CD4-positive, alpha-beta memory T cell (primary cell): ENCODE measurements at regions of chr14 and their contacts with region 1.

Region 1: GRCh38 chr14:102591889-102592763 is at the start of gene RCOR1:
- DNase-seq: peak; percentile 97 to 99 (median 98)
- H3K4me3 ChIP-seq: peak within 1 kb of the TSS; percentile 52 to 86
- H3K4me3 Mint-ChIP-seq: peak within 1 kb of the TSS; percentile 90 to 97 (median 94)
- H3K27ac ChIP-seq: peak within 1 kb of the TSS; percentile 77
- H3K27ac Mint-ChIP-seq: peak within 1 kb of the TSS; percentile 93 to 98 (median 96)
- H3K4me1 ChIP-seq: peaks cover 25% of the 10 kb centered on the region
- H3K4me1 Mint-ChIP-seq: peaks cover 13 to 28% (median 22%) of the 10 kb centered on the region in 4 donors
- H3K27me3 ChIP-seq: no peaks in the 10 kb centered on the region
- H3K27me3 Mint-ChIP-seq: no peaks in the 10 kb centered on the region
- total RNA-seq, gene RCOR1: 19.4 to 21.5 TPM

Region 2: GRCh38 chr14:101947906-101948665 is 644.0 kb before region 1 on chr14:
- CTCF ChIA-PET with region 1: no interaction called
- POLR2A ChIA-PET with region 1: no interaction called
- intact Hi-C with region 1: loop called (anchors 1 kb)
- DNase-seq: peak; percentile 99 to 100 (median 100)
- H3K4me3 ChIP-seq: peak overlapping the region; percentile 87 to 98
- H3K4me3 Mint-ChIP-seq: peak overlapping the region; percentile 92 to 99 (median 96)
- H3K27ac ChIP-seq: peak overlapping the region; percentile 94
- H3K27ac Mint-ChIP-seq: peak overlapping the region; percentile 99 to 100 (median 100)
- H3K4me1 ChIP-seq: peaks cover 13% of the 10 kb centered on the region
- H3K4me1 Mint-ChIP-seq: peaks cover 6 to 31% (median 21%) of the 10 kb centered on the region in 4 donors
- H3K27me3 ChIP-seq: peaks cover 5% of the 10 kb centered on the region
- H3K27me3 Mint-ChIP-seq: peaks cover 9 to 16% of the 10 kb centered on the region in 2 donors

Region 3: GRCh38 chr14:102509744-102510615 is 82.1 kb before region 1 on chr14 and contains the start of gene ANKRD9:
- CTCF ChIA-PET with region 1: interaction called, 4 read pairs
- POLR2A ChIA-PET with region 1: no interaction called
- intact Hi-C with region 1: loop called (anchors 5 kb)
- DNase-seq: peak; percentile 71 to 80 (median 75)
- H3K4me3 ChIP-seq: peak within 1 kb of the TSS; percentile 57 to 68
- H3K4me3 Mint-ChIP-seq: peak within 1 kb of the TSS; percentile 85 to 89 (median 86)
- H3K27ac ChIP-seq: peak within 1 kb of the TSS; percentile 44
- H3K27ac Mint-ChIP-seq: peak within 1 kb of the TSS; percentile 75 to 88 (median 79)
- H3K4me1 ChIP-seq: peaks cover 13% of the 10 kb centered on the region
- H3K4me1 Mint-ChIP-seq: peaks cover 1 to 20% (median 10%) of the 10 kb centered on the region in 4 donors
- H3K27me3 ChIP-seq: no peaks in the 10 kb centered on the region
- H3K27me3 Mint-ChIP-seq: peaks cover 0 to 2% of the 10 kb centered on the region in 2 donors
- total RNA-seq, gene ANKRD9: 1.8 to 2.5 TPM

Region 4: GRCh38 chr14:102555264-102555831 is 36.8 kb before region 1 on chr14:
- CTCF ChIA-PET with region 1: interaction called, 4 read pairs
- POLR2A ChIA-PET with region 1: interaction called, 4 read pairs
- intact Hi-C with region 1: loop called (anchors 1 kb)
- DNase-seq: peak; percentile 59 to 68 (median 66)
- H3K4me3 ChIP-seq: peak overlapping the region; percentile 57 to 73
- H3K4me3 Mint-ChIP-seq: peak overlapping the region; percentile 65 to 86 (median 77)
- H3K27ac ChIP-seq: peak overlapping the region; percentile 76
- H3K27ac Mint-ChIP-seq: peak overlapping the region in 6 of 7 donors; percentile 36 to 83 (median 66)
- H3K4me1 ChIP-seq: peaks cover 5% of the 10 kb centered on the region
- H3K4me1 Mint-ChIP-seq: peaks cover 0 to 4% (median 0%) of the 10 kb centered on the region in 4 donors
- H3K27me3 ChIP-seq: no peaks in the 10 kb centered on the region
- H3K27me3 Mint-ChIP-seq: peaks cover 2 to 3% of the 10 kb centered on the region in 2 donors

Region 5: DNA sequence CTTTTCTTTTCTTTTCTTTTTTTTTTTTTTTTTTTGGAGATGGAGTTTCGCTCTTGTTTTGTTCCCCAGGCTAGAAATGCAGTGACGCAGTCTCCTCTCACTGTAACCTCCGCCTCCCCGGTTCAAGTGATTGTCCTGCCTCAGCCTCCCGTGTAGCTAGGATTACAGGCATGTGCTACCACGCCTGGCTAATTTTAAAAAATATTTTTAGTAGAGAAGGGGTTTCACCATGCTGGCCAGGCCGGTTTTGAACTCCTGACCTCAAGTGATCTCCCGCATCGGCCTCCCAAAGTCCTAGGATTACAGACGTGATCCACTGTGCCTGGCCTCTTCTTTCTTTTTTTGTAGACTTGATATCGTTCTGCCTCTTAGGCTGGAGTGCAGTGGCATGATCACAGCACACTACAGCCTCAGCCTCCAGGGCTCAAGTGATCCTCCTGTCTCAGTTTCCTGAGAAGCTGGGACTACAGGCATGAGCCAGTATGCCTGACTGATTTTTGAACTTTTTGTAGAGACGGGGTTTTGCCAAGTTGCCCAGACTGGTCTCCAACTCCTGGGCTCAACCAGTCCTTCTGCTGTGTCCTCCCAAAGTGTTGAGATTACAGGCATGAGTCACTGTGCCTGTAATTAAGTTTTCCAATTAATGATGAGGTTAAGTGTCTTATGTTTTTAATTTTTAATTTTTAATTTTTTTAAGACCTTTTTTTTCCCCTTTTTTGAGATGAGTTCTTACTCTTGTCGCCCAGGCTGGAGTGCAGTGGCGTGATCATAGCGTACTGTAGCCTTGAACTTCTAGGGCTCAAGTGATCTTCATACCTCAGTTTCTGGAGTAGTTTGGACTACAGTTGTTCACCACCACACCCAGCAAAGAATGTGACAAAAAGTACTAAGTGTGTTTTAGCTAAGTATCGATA is 10.5 kb after region 1 on chr14:
- CTCF ChIA-PET with region 1: interaction called, 11 read pairs
- POLR2A ChIA-PET with region 1: interaction called, 3 read pairs
- intact Hi-C with region 1: no loop called
- DNase-seq: no peak
- H3K4me3 ChIP-seq: no peak overlapping the region
- H3K4me3 Mint-ChIP-seq: peak overlapping the region in 1 of 8 donors; percentile 25
- H3K27ac ChIP-seq: no peak overlapping the region
- H3K27ac Mint-ChIP-seq: peak overlapping the region in 1 of 7 donors; percentile 62
- H3K4me1 ChIP-seq: peaks cover 10% of the 10 kb centered on the region
- H3K4me1 Mint-ChIP-seq: peaks cover 23 to 51% (median 31%) of the 10 kb centered on the region in 4 donors
- H3K27me3 ChIP-seq: no peaks in the 10 kb centered on the region
- H3K27me3 Mint-ChIP-seq: no peaks in the 10 kb centered on the region

Region 6: DNA sequence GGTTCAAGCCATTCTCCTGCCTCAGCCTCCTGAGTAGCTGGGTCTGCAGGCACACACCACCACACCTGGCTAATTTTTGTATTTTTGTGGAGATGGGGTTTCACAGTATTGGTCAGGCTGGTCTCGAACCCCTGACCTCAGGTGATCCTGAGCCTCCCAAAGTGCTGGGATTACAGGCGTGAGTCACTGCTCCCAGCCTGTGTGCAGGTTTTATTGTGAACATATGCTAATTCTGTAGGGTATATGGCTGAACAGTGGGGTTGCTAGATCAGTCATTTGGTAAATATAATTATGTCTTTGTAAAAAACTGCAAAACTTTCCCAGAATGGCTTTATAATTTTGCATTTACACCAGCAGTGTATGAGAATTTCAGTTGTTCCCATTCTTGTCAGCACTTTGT is 86.3 kb after region 1 on chr14:
- CTCF ChIA-PET with region 1: no interaction called
- POLR2A ChIA-PET with region 1: no interaction called
- intact Hi-C with region 1: no loop called
- DNase-seq: no peak
- H3K4me3 ChIP-seq: no peak overlapping the region
- H3K4me3 Mint-ChIP-seq: no peak overlapping the region
- H3K27ac ChIP-seq: no peak overlapping the region
- H3K27ac Mint-ChIP-seq: no peak overlapping the region
- H3K4me1 ChIP-seq: no peaks in the 10 kb centered on the region
- H3K4me1 Mint-ChIP-seq: peaks cover 4 to 14% (median 8%) of the 10 kb centered on the region in 4 donors
- H3K27me3 ChIP-seq: no peaks in the 10 kb centered on the region
- H3K27me3 Mint-ChIP-seq: no peaks in the 10 kb centered on the region

Region 7: DNA sequence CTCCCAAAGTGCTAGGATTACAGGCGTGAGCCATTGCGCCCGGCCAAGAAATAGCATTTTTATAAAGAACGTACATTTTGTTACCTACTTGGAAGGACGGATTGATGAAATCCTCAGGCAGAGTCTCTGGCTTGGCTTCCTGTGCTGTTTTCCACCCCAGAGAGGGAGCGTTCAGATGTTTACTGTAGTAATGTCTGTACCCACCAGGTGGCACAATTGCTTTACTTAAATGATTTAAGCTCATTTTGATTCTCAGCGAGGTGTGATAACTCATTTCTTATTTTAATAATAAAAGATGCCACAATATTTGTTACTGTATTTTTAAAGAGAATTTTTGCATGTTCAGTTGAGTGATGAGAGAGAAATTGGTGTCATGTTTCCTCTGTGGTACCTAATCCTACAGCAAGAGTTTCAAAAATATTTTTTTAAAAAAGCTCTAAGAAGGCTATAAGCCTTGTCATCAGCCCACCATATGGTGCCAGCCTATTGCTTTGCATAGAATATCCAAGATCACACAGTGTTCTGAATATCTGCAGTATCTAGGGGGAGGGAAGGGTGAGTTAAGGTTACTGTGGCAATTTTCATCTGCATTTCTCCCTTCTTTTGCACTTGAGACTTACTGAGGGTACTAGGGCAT is 102.5 kb after region 1 on chr14:
- CTCF ChIA-PET with region 1: interaction called, 11 read pairs
- POLR2A ChIA-PET with region 1: interaction called, 4 read pairs
- intact Hi-C with region 1: no loop called
- DNase-seq: peak; percentile 56 to 64 (median 61)
- H3K4me3 ChIP-seq: no peak overlapping the region
- H3K4me3 Mint-ChIP-seq: no peak overlapping the region
- H3K27ac ChIP-seq: no peak overlapping the region
- H3K27ac Mint-ChIP-seq: peak overlapping the region in 3 of 7 donors; percentile 8 to 76 (median 56)
- H3K4me1 ChIP-seq: peaks cover 12% of the 10 kb centered on the region
- H3K4me1 Mint-ChIP-seq: peaks cover 19 to 30% (median 22%) of the 10 kb centered on the region in 4 donors
- H3K27me3 ChIP-seq: no peaks in the 10 kb centered on the region
- H3K27me3 Mint-ChIP-seq: no peaks in the 10 kb centered on the region

Region 8: DNA sequence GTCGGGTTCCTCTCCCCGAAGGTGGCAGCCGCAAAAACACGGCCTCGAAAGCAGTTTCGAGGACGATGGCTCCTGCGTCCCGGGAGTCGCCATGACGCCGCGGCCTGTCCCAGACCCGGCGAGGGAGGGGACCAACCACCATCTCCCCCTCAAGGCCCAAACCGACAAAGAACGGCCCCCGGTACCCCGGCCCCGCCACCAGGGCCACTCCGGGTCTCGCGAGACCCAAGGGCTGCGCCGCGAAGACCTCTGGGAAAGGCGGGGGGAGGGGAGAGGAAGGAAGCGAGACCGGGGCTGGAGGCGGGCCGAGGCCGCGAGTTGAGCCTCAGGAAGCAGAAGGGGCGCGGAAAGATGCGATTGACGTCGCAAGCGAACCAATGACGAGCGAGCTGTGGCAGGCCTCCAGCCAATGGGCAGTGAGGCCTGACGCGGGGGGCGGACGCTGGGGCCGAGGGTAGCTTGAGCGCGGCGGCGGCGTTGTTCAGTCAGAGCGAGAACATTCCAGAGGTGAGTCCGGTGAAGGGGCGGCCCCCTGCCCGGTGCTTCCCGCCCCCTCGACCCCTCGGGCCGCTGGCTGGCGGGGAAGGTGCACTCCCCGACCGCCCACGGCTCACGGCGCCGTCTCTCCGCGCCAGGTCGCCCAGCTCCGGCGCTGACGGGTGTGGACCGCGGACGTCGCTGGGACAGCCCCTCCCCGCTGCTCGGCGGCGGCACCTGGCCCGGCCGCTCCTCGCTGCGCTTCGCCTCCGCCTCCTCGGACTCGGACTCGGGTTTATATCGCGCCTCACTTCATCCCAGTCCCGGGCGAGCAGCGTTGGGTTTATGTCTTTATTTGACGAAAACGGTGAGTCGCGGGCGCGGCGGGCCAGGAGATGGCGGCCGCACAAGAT is 741.9 kb after region 1 on chr14 and contains the start of gene EIF5:
- CTCF ChIA-PET with region 1: no interaction called
- POLR2A ChIA-PET with region 1: no interaction called
- intact Hi-C with region 1: loop called (anchors 5 kb)
- DNase-seq: peak; percentile 99
- H3K4me3 ChIP-seq: peak within 1 kb of the TSS; percentile 82 to 94
- H3K4me3 Mint-ChIP-seq: peak within 1 kb of the TSS; percentile 93 to 99 (median 96)
- H3K27ac ChIP-seq: peak within 1 kb of the TSS; percentile 93
- H3K27ac Mint-ChIP-seq: peak within 1 kb of the TSS; percentile 96 to 99 (median 98)
- H3K4me1 ChIP-seq: peaks cover 39% of the 10 kb centered on the region
- H3K4me1 Mint-ChIP-seq: peaks cover 20 to 52% (median 36%) of the 10 kb centered on the region in 4 donors
- H3K27me3 ChIP-seq: no peaks in the 10 kb centered on the region
- H3K27me3 Mint-ChIP-seq: no peaks in the 10 kb centered on the region
- total RNA-seq, gene EIF5: 265 to 269 TPM